ENCODE measurements at regions of chr1 and their contacts with region 1.

Region 1: DNA sequence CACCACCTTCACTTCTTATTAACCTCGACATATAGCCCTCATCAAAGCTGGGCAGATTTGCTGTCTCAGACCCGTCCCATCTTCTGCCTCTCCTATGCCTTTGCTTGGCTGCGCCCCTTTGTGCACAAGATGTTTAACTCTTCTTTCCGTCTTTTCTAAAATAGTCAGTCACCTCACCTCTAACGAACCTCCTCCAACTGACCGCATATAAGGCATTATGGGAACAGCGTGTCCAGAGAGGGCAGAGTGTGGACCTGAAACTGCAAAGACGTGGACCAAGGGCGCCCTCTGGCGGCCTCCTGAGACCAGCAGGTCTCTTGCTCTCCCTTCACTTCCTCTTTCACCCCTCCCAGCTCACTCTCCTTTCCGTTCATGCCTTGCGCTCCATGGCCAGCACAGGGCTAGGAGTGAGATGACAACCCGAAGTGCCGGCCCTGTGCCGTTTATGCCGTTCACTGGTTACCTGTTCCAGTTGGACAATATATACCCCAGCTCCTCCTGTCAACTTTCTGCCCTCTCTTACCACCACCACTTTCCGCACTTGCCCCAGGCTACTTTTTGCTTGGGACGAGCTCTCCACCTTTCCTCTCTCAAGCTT is 2.5 kb upstream of the METTL25B start:
- DNase-seq: peak; percentile 77
- ATAC-seq: peak; percentile 78
- H3K4me3 ChIP-seq: peak overlapping the region; percentile 87 to 99
- H3K27ac ChIP-seq: peak overlapping the region; percentile 87
- H3K4me1 ChIP-seq: peaks cover 33% of the 10 kb centered on the region
- H3K27me3 ChIP-seq: no peaks in the 10 kb centered on the region
- CTCF ChIP-seq: peak; percentile 91

Region 2: GRCh38 chr1:156451505-156452160 is 274.1 kb before region 1 on chr1:
- CTCF ChIA-PET with region 1: no interaction called
- POLR2A ChIA-PET with region 1: no interaction called
- in situ Hi-C with region 1: no loop called
- intact Hi-C with region 1: no loop called
- DNase-seq: no peak
- ATAC-seq: no peak
- H3K4me3 ChIP-seq: no peak overlapping the region
- H3K27ac ChIP-seq: no peak overlapping the region
- H3K4me1 ChIP-seq: peaks cover 4% of the 10 kb centered on the region; the same call in 1 of the 2 replicates
- H3K27me3 ChIP-seq: no peaks in the 10 kb centered on the region
- CTCF ChIP-seq: no peak

Region 3: GRCh38 chr1:156618853-156619581 is 106.8 kb before region 1 on chr1 and contains the start of gene HAPLN2:
- CTCF ChIA-PET with region 1: interaction called, 10 read pairs
- POLR2A ChIA-PET with region 1: no interaction called
- in situ Hi-C with region 1: no loop called
- intact Hi-C with region 1: no loop called
- DNase-seq: no peak
- ATAC-seq: no peak
- H3K4me3 ChIP-seq: no peak within 1 kb of the TSS
- H3K27ac ChIP-seq: no peak within 1 kb of the TSS
- H3K4me1 ChIP-seq: peaks cover 4% of the 10 kb centered on the region
- H3K27me3 ChIP-seq: no peaks in the 10 kb centered on the region
- CTCF ChIP-seq: peak; percentile 83
- total RNA-seq, gene HAPLN2: 0.21 TPM